Caco-2 (cell line): ENCODE measurements at regions of chr2 and their contacts with region 1.

Region 1: DNA sequence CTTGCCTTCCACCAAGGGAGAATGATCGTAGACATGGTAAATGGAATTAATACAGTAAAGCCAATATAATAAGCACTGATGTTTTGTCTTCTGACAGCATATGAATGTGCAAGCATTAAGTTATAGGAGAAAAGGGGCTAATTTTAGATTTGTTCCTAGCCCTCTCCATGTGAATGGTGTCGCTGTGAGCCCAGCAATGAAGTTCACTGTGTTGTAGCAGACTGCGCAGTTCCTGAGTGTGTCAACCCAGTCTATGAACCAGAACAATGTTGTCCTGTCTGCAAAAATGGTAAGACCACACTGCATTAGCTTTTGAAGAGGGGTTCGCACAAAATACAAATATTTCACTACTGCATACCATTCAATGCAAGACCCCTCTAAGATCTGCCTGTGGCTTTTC is 25.6 kb downstream of the VWC2L start:
- DNase-seq: no peak
- H3K4me3 ChIP-seq: no peak overlapping the region
- H3K4me3 Mint-ChIP-seq: no peak overlapping the region
- H3K27ac Mint-ChIP-seq: no peak overlapping the region
- H3K4me1 ChIP-seq: no peaks in the 10 kb centered on the region
- H3K4me1 Mint-ChIP-seq: no peaks in the 10 kb centered on the region
- H3K27me3 ChIP-seq: no peaks in the 10 kb centered on the region
- H3K27me3 Mint-ChIP-seq: peaks cover 3% of the 10 kb centered on the region
- CTCF ChIP-seq: no peak

Region 2: GRCh38 chr2:214410918-214411554 is 25.4 kb before region 1 on chr2 and contains the start of gene VWC2L:
- CTCF ChIA-PET with region 1: no interaction called
- POLR2A ChIA-PET with region 1: no interaction called
- intact Hi-C with region 1: loop called (anchors 1 kb)
- DNase-seq: peak; percentile 75 to 84
- H3K4me3 ChIP-seq: no peak within 1 kb of the TSS
- H3K4me3 Mint-ChIP-seq: no peak within 1 kb of the TSS
- H3K27ac Mint-ChIP-seq: no peak within 1 kb of the TSS
- H3K4me1 ChIP-seq: no peaks in the 10 kb centered on the region
- H3K4me1 Mint-ChIP-seq: no peaks in the 10 kb centered on the region
- H3K27me3 ChIP-seq: no peaks in the 10 kb centered on the region
- H3K27me3 Mint-ChIP-seq: no peaks in the 10 kb centered on the region
- CTCF ChIP-seq: no peak
- total RNA-seq, gene VWC2L: not detected in 2 replicates